ENCODE measurements at regions of chr20 and their contacts with region 1.

Region 1: GRCh38 chr20:20466341-20466879 is 98.5 kb downstream of the INSM1 start:
- DNase-seq: no peak
- H3K4me3 ChIP-seq: no peak overlapping the region
- H3K27ac ChIP-seq: no peak overlapping the region
- H3K4me1 ChIP-seq: no peaks in the 10 kb centered on the region
- H3K27me3 ChIP-seq: no peaks in the 10 kb centered on the region
- CTCF ChIP-seq: no peak
- EP300 ChIP-seq: no peak
- POLR2A ChIP-seq: no peak

Region 2: GRCh38 chr20:20435453-20435852 is 31.0 kb before region 1 on chr20:
- in situ Hi-C with region 1: no loop called
- intact Hi-C with region 1: loop called (anchors 1 kb)
- DNase-seq: no peak
- H3K4me3 ChIP-seq: no peak overlapping the region
- H3K27ac ChIP-seq: no peak overlapping the region
- H3K4me1 ChIP-seq: peaks cover 0 to 13% (median 10%) of the 10 kb centered on the region in 4 donors
- H3K27me3 ChIP-seq: no peaks in the 10 kb centered on the region
- CTCF ChIP-seq: no peak
- EP300 ChIP-seq: no peak
- POLR2A ChIP-seq: no peak

Region 3: GRCh38 chr20:20690676-20691476 is 224.5 kb after region 1 on chr20:
- in situ Hi-C with region 1: no loop called
- intact Hi-C with region 1: no loop called
- DNase-seq: no peak
- H3K4me3 ChIP-seq: no peak overlapping the region
- H3K27ac ChIP-seq: no peak overlapping the region
- H3K4me1 ChIP-seq: peaks cover 0 to 5% (median 0%) of the 10 kb centered on the region in 4 donors
- H3K27me3 ChIP-seq: no peaks in the 10 kb centered on the region
- CTCF ChIP-seq: no peak
- EP300 ChIP-seq: no peak
- POLR2A ChIP-seq: no peak